Dendritic cell treated with granulocyte-macrophage colony-stimulating factor and Interleukin-4, amounts not matched to agents 40 ng/mL and 50 ng/mL, for 4 days (primary cell): ENCODE measurements at regions of chr20 and their contacts with region 1.

Region 1: DNA sequence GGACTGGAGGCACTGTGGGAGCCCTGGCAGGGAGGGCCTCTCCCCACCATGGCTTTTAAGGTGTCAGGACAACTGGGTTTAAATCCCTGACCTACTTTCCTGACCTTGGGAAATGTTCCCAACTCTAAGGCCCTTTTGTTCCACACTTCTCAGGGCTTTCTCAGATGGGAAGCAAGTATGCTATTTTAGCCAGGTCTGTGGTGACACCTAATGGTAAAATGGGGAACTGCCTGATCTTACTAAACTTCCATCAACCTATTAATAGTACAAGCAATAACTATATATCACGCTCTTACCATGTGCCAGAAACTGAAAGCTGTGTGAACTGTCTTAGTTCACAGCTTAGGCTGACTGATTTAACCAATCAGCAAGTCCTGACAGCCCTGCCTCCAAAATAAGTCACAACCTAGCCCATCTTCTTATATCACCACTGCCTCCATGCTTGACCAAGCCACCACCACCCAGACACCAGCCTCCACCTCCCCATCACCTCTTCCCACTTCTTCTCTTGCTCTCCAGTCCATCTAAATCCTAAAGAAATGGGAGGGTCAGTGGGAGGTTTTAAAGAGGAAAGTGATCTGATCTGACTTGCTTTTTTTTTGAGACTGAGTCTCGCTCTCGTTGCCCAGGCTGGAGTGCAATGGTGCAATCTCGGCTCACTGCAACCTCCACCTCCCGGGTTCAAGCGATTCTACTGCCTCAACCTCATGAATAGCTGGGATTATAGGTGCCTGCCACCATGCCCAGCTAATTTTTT is 6.9 kb upstream of the BLCAP start:
- H3K4me3 Mint-ChIP-seq: no peak overlapping the region
- H3K27ac Mint-ChIP-seq: no peak overlapping the region
- H3K4me1 Mint-ChIP-seq: peaks cover 13% of the 10 kb centered on the region
- H3K27me3 Mint-ChIP-seq: peaks cover 6% of the 10 kb centered on the region

Region 2: GRCh38 chr20:37192137-37192854 is 342.3 kb before region 1 on chr20:
- intact Hi-C with region 1: loop called (anchors 2 kb)
- H3K4me3 Mint-ChIP-seq: no peak overlapping the region
- H3K27ac Mint-ChIP-seq: no peak overlapping the region
- H3K4me1 Mint-ChIP-seq: peaks cover 67% of the 10 kb centered on the region
- H3K27me3 Mint-ChIP-seq: no peaks in the 10 kb centered on the region

Region 3: GRCh38 chr20:37202267-37202943 is 332.2 kb before region 1 on chr20:
- intact Hi-C with region 1: loop called (anchors 1 kb)
- H3K4me3 Mint-ChIP-seq: no peak overlapping the region
- H3K27ac Mint-ChIP-seq: no peak overlapping the region
- H3K4me1 Mint-ChIP-seq: no peaks in the 10 kb centered on the region
- H3K27me3 Mint-ChIP-seq: no peaks in the 10 kb centered on the region